IMR-90 (cell line): ENCODE measurements at regions of chr7 and their contacts with region 1.

Region 1: GRCh38 chr7:25720427-25720826 is 431.6 kb upstream of the NFE2L3 start:
- DNase-seq: peak; percentile 2
- ATAC-seq: no peak
- H3K4me3 ChIP-seq: no peak overlapping the region
- H3K27ac ChIP-seq: no peak overlapping the region
- H3K4me1 ChIP-seq: peaks cover 3% of the 10 kb centered on the region; the same call in 1 of the 2 replicates
- H3K27me3 ChIP-seq: no peaks in the 10 kb centered on the region
- CTCF ChIP-seq: 0 out of 2 replicates have a peak, but pooled peaks have one; percentile 17
- POLR2A ChIP-seq: no peak
- RAD21 ChIP-seq: no peak

Region 2: DNA sequence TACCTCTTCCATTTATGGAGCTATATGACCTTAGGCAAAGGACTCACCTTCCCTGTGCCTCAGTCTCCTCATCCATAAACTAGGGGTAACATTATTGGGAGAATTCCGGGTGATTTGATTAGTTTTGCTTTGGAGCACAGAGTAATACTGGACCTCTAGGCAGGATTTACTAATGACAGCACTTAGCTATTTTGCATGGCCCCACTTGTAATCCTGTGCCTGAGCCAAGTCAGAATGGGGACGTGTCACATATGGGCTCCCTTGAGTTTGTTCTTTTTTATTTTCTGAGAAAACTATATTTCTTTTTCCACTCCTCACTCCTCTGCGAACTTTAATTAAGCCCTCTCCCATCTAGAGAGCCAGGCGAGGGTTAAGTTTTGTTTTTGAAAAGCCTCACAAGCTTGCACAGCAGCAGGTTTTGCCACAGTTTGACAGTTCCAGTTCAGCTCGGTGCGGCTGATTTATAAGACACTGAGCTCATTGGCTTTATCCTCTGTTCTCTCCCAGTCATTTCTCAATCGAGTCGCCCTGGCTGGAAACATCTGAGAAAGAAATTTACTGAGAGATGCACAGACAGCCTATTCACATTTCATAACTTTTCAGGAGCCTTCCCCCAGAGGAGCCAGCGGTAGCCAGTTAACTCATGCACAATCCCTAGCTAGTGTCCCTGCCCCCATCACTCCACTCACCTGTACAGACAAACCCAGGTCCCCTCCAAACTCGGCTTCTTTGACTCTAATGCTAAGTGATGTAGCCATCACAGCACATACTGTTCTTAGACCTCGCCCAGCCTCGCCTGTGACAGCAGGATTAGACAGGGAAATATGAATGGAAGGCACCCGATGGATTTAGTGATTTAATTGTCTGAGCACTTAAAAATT is 50.2 kb before region 1 on chr7:
- CTCF ChIA-PET with region 1: no interaction called
- POLR2A ChIA-PET with region 1: no interaction called
- dilution Hi-C with region 1: no loop called
- in situ Hi-C with region 1: no loop called
- intact Hi-C with region 1: loop called (anchors 1 kb)
- DNase-seq: no peak
- ATAC-seq: no peak
- H3K4me3 ChIP-seq: no peak overlapping the region
- H3K27ac ChIP-seq: no peak overlapping the region; the same call in 1 of the 2 replicates
- H3K4me1 ChIP-seq: no peaks in the 10 kb centered on the region; the same call in 1 of the 2 replicates
- H3K27me3 ChIP-seq: peaks cover 2% of the 10 kb centered on the region; the same call in 1 of the 2 replicates
- CTCF ChIP-seq: no peak
- POLR2A ChIP-seq: no peak
- RAD21 ChIP-seq: no peak